Natural killer cell (primary cell): ENCODE measurements at regions of chr2 and their contacts with region 1.

Region 1: GRCh38 chr2:12931186-12931844 is 214.6 kb downstream of the TRIB2 start:
- DNase-seq: peak in 1 of 2 donors; percentile 54
- ATAC-seq: peak in 2 of 3 donors; percentile 44 to 76
- H3K4me3 ChIP-seq: no peak overlapping the region
- H3K4me3 Mint-ChIP-seq: no peak overlapping the region
- H3K27ac ChIP-seq: no peak overlapping the region
- H3K27ac Mint-ChIP-seq: no peak overlapping the region
- H3K4me1 ChIP-seq: no peaks in the 10 kb centered on the region
- H3K4me1 Mint-ChIP-seq: peaks cover 6 to 10% of the 10 kb centered on the region in 2 donors
- H3K27me3 ChIP-seq: no peaks in the 10 kb centered on the region
- H3K27me3 Mint-ChIP-seq: peaks cover 0 to 9% of the 10 kb centered on the region in 2 donors
- CTCF ChIP-seq: peak; percentile 80

Region 2: DNA sequence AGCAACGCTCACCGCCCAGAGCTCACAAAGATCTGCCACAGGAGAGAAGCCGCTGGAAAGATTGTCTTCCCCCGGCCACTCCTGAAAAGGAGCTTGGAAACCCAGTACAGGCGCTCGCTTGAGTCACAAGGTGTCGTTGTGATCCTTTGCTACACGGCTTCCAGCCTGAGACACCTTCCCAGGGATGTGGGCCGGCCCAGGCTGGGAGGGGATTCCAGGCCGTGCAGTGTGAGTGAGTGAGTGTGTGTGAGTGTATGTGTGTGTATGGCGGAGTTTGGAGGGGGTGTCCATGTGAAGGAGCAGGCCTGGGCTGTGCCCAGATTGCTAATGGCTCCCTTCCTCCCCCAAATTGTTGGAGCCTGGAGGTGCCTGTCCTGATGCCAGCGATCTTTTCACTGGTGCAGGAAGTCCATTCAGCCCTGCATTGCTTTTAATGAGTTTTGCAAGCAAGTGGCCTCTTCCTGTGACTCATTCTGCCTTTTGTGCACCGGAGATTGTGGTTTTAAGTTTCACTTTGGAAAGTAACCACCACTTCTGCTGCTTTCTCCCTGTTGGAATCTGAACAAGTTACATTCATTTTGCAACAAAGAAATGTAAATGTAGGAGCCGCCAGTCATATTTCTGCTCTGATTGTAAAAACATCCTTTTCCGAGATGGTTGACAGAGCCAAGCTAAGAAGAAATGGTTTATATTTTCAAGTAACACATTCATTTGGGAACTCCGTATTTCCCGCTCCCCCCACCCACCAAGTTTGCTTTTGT is 1101.2 kb before region 1 on chr2:
- intact Hi-C with region 1: loop called (anchors 1 kb)
- DNase-seq: peak; percentile 26 to 74
- ATAC-seq: peak; percentile 75 to 81 (median 77)
- H3K4me3 ChIP-seq: peak overlapping the region; percentile 1
- H3K4me3 Mint-ChIP-seq: peak overlapping the region; percentile 88
- H3K27ac ChIP-seq: no peak overlapping the region
- H3K27ac Mint-ChIP-seq: peak overlapping the region; percentile 57 to 84
- H3K4me1 ChIP-seq: peaks cover 39% of the 10 kb centered on the region
- H3K4me1 Mint-ChIP-seq: peaks cover 48 to 49% of the 10 kb centered on the region in 2 donors
- H3K27me3 ChIP-seq: no peaks in the 10 kb centered on the region
- H3K27me3 Mint-ChIP-seq: no peaks in the 10 kb centered on the region
- CTCF ChIP-seq: no peak

Region 3: DNA sequence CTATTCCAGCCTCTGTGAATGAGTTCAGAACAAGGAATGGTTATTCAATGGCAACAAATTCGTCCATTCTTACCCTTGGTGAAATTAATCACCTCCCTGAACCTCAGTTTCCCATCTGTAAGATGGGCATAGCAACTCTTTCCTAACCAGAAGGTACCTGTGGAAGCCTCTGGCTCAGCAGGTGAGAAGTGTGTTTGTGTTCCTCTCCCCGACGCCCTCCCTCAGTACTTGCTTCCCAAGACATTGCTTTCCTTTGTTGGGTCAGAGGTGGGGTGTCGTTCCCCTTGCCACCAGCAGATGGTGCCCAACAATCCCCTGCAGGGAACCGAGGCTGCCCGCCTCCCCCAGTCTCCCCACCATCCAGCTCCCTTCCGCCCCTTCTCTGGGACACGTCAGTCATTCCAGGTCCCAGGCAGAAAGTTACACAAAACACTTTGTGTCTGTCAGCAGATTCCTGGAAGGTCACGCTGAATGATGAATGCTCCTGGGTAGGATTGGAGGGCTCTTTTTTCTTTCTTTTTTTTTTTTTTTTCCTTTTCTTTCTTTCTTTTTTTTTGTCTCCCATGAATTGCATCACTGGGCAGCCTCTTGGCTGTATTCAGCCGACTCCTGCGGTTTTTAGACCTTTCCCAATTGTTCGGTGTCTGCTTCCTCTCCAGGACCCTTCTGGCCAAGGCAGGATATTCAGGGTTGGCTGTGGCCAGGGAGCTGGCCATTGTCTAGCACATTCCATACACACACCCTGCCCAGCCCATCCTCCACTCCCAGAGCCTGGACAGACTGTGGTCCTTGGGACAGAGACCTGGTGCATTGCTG is 1067.6 kb before region 1 on chr2:
- intact Hi-C with region 1: loop called (anchors 10 kb)
- DNase-seq: peak; percentile 52 to 86
- ATAC-seq: peak; percentile 83 to 95 (median 94)
- H3K4me3 ChIP-seq: no peak overlapping the region
- H3K4me3 Mint-ChIP-seq: peak overlapping the region; percentile 71
- H3K27ac ChIP-seq: no peak overlapping the region
- H3K27ac Mint-ChIP-seq: peak overlapping the region in 1 of 2 donors; percentile 60
- H3K4me1 ChIP-seq: peaks cover 12% of the 10 kb centered on the region
- H3K4me1 Mint-ChIP-seq: peaks cover 6 to 15% of the 10 kb centered on the region in 2 donors
- H3K27me3 ChIP-seq: no peaks in the 10 kb centered on the region
- H3K27me3 Mint-ChIP-seq: peaks cover 7 to 11% of the 10 kb centered on the region in 2 donors
- CTCF ChIP-seq: peak; percentile 94

Region 4: GRCh38 chr2:12416600-12416999 is 514.7 kb before region 1 on chr2:
- intact Hi-C with region 1: loop called (anchors 2 kb)
- DNase-seq: peak; percentile 36 to 80
- ATAC-seq: peak; percentile 48 to 73 (median 59)
- H3K4me3 ChIP-seq: no peak overlapping the region
- H3K4me3 Mint-ChIP-seq: peak overlapping the region; percentile 47
- H3K27ac ChIP-seq: no peak overlapping the region
- H3K27ac Mint-ChIP-seq: peak overlapping the region in 1 of 2 donors; percentile 8
- H3K4me1 ChIP-seq: peaks cover 7% of the 10 kb centered on the region
- H3K4me1 Mint-ChIP-seq: peaks cover 29 to 40% of the 10 kb centered on the region in 2 donors
- H3K27me3 ChIP-seq: no peaks in the 10 kb centered on the region
- H3K27me3 Mint-ChIP-seq: no peaks in the 10 kb centered on the region
- CTCF ChIP-seq: peak; percentile 65